Mammary epithelial cell (primary cell): ENCODE measurements at regions of chr12 and their contacts with region 1.

Region 1: DNA sequence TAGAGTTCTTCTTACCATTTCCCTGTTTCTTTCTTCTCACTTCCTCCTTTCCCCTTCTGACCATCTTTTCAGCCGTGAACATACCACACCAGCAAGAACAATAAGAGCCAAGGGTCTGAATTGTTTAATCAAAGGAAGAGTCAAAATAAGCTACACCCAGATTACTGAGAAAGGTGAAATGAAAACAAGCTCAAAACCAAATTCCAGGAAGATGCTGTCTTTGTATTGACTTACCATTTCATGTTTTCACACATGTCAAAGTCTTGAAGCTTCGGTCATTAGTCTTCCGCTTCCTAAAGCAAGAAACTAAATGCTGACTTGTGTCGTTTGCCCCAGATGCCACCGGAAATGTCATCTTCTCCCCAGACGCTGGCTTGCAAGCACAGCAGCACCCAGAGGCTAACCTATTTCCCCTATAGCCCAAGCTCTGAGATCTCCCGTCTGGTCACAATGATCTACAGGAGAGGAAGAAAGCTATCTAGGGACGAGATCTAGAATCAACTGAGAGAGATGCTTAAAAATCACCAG is 136.5 kb upstream of the AMIGO2 start:
- DNase-seq: no peak
- H3K4me3 ChIP-seq: no peak overlapping the region
- H3K27ac ChIP-seq: no peak overlapping the region
- H3K4me1 ChIP-seq: peaks cover 53% of the 10 kb centered on the region
- H3K27me3 ChIP-seq: no peaks in the 10 kb centered on the region
- CTCF ChIP-seq: no peak

Region 2: GRCh38 chr12:47141467-47141866 is 74.7 kb before region 1 on chr12:
- CTCF ChIA-PET with region 1: no interaction called
- dilution Hi-C with region 1: loop called (anchors 5 kb)
- in situ Hi-C with region 1: no loop called
- intact Hi-C with region 1: no loop called
- DNase-seq: peak; percentile 51
- H3K4me3 ChIP-seq: no peak overlapping the region
- H3K27ac ChIP-seq: no peak overlapping the region
- H3K4me1 ChIP-seq: peaks cover 12% of the 10 kb centered on the region
- H3K27me3 ChIP-seq: no peaks in the 10 kb centered on the region
- CTCF ChIP-seq: no peak

Region 3: DNA sequence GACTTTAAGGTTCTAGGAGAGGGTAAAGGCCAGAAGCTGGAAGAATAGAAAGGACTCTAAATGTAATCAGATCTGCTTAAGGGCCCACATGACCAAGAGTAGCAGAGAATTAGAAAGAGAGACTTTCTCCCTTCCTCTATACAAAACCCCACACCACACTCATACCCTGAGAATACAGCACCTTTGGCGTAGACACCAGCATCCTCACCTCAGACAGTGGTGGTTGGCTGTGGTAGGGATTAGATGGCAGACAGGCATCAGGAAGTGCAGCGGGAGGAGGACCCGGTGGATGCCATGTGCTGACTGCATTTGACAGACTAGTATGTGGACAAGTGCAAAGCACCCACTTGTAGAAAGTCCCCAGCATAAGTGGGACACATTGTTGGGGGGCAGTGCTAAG is 38.2 kb before region 1 on chr12:
- CTCF ChIA-PET with region 1: no interaction called
- dilution Hi-C with region 1: loop called (anchors 5 kb)
- in situ Hi-C with region 1: no loop called
- intact Hi-C with region 1: no loop called
- DNase-seq: no peak
- H3K4me3 ChIP-seq: no peak overlapping the region
- H3K27ac ChIP-seq: no peak overlapping the region
- H3K4me1 ChIP-seq: no peaks in the 10 kb centered on the region
- H3K27me3 ChIP-seq: no peaks in the 10 kb centered on the region
- CTCF ChIP-seq: no peak

Region 4: GRCh38 chr12:47270782-47271664 is 54.8 kb after region 1 on chr12:
- CTCF ChIA-PET with region 1: no interaction called
- dilution Hi-C with region 1: no loop called
- in situ Hi-C with region 1: no loop called
- intact Hi-C with region 1: loop called (anchors 2 kb)
- DNase-seq: peak; percentile 97
- H3K4me3 ChIP-seq: no peak overlapping the region
- H3K27ac ChIP-seq: peak overlapping the region; percentile 99
- H3K4me1 ChIP-seq: peaks cover 68% of the 10 kb centered on the region
- H3K27me3 ChIP-seq: no peaks in the 10 kb centered on the region
- CTCF ChIP-seq: no peak